Dendritic cell treated with granulocyte-macrophage colony-stimulating factor and Interleukin-4, amounts not matched to agents 40 ng/mL and 50 ng/mL, for 4 days (primary cell): ENCODE measurements at regions of chr3 and their contacts with region 1.

Region 1: DNA sequence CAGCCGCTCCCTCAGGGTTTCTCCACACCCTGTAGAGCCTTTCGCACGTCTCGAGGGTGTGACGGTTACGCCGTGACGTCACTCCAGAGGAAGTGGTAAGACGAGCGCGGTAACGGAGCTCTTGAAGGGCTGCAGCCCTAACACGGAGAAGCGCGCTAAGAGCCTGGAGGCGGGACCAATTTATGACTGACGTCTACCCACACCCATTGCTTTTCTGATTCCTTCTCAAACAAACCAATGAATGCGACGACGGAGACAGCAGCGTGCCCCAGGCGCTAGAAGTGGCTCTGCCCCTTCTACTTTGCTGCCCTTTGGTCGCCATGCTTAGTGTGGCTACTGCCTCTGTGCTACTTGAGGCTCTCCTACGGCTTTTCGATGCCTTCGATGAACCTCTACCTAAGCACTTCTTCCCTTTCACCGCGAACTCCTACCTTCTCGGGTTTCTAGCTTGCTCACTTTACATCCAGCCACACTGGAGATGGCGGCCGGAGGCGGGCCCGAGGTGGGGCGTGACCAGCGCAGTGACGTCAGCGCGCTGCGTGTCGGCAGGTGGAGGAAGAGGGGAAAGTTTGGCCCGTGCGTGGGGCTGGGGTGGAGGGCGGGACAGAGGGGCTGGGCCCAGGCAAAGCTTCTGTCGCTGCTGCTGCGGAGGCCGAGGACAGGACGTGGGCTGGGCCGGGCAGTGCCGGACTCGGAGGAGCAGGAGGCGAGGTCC is at the start of gene OXSR1:
- H3K4me3 Mint-ChIP-seq: peak within 1 kb of the TSS; percentile 92
- H3K27ac Mint-ChIP-seq: peak within 1 kb of the TSS; percentile 96
- H3K4me1 Mint-ChIP-seq: peaks cover 50% of the 10 kb centered on the region
- H3K27me3 Mint-ChIP-seq: no peaks in the 10 kb centered on the region

Region 2: DNA sequence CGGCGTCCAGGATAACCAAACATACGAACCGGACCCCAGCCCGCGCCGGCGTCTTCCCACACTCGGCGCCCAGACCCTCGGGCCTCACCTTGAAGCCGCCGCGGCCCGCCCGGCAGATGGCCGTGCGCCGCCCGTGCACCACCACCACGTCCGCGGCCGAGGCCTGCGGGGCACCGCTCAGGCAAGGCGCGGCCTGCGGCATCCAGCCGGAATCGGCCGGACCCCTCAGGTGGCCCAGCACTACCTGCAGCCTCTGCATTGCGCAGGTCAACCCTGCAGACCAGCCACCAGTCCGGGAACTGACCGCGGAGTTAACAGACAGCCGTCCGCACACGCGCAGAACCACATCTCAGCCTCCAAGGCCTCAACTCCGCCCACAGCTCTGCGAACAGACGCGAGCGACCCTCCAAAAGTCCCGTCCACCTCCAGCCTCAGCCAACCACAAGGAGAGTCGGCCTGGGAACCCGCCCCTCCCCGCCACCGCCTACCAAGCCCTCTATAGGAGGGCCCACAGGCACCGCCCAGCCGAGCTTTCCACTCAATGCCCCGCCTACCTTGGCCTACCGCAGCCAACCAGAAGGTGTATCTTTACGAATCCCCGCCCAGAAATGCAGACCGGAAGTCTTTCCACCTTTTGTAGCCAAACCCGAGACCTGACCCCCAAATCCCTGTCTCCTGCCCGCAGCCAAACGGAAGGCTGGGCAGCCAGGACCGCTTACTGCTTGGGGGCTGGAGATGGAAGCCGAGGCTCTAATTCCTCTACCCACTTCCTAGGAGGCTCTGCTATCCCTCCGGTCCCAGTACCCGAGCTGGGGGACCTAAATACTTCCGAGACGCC is 28.1 kb before region 1 on chr3 and contains the start of gene ACAA1:
- intact Hi-C with region 1: loop called (anchors 1 kb)
- H3K4me3 Mint-ChIP-seq: peak within 1 kb of the TSS; percentile 96
- H3K27ac Mint-ChIP-seq: peak within 1 kb of the TSS; percentile 98
- H3K4me1 Mint-ChIP-seq: peaks cover 82% of the 10 kb centered on the region
- H3K27me3 Mint-ChIP-seq: no peaks in the 10 kb centered on the region

Region 3: DNA sequence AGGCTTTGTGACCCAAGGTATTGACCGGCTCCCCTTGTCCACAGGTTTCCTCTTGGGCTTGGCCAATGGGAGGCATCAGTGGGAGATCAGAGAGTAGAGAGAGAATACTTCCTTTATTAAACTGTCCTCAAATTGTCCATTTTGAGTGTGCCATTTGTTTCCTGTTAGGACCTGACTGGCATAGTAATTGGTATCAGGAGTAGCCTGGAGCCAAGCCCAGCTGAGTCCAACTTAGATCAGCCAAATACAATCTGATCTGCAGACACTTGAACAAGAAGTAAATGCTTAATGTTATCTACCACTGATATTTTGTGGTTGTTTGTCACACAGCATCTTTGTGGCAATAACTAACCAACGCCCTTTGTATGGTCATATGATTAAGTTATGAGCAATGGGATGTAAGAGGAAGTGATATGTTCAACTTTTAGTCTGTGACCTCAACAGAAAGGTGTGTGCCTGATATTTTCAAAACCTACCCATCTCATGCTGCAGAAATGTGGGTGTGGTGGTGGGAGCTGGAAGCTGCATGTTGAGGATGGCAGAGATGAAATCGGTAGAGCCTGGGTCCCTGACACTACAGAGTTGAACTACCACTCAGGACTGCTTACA is 13.4 kb before region 1 on chr3:
- intact Hi-C with region 1: loop called (anchors 1 kb)
- H3K4me3 Mint-ChIP-seq: no peak overlapping the region
- H3K27ac Mint-ChIP-seq: peak overlapping the region; percentile 79
- H3K4me1 Mint-ChIP-seq: peaks cover 65% of the 10 kb centered on the region
- H3K27me3 Mint-ChIP-seq: no peaks in the 10 kb centered on the region